ENCODE measurements at regions of chr18 and their contacts with region 1.

Region 1: GRCh38 chr18:62445386-62445917 is 77.4 kb upstream of the ZCCHC2 start:
- DNase-seq: no peak
- H3K4me3 ChIP-seq: no peak overlapping the region
- CTCF ChIP-seq: no peak
- POLR2A ChIP-seq: no peak

Region 2: GRCh38 chr18:62702253-62702652 is 256.8 kb after region 1 on chr18:
- intact Hi-C with region 1: loop called (anchors 10 kb)
- DNase-seq: no peak
- H3K4me3 ChIP-seq: no peak overlapping the region
- CTCF ChIP-seq: no peak
- POLR2A ChIP-seq: no peak

Region 3: GRCh38 chr18:62729487-62730386 is 284.3 kb after region 1 on chr18:
- intact Hi-C with region 1: no loop called
- DNase-seq: no peak
- H3K4me3 ChIP-seq: no peak overlapping the region
- CTCF ChIP-seq: no peak
- POLR2A ChIP-seq: no peak

Measured in lower leg skin (tissue), 4 donors.